Posterior vena cava (tissue), 2 donors: ENCODE measurements at regions of chr6 and their contacts with region 1.

Region 1: DNA sequence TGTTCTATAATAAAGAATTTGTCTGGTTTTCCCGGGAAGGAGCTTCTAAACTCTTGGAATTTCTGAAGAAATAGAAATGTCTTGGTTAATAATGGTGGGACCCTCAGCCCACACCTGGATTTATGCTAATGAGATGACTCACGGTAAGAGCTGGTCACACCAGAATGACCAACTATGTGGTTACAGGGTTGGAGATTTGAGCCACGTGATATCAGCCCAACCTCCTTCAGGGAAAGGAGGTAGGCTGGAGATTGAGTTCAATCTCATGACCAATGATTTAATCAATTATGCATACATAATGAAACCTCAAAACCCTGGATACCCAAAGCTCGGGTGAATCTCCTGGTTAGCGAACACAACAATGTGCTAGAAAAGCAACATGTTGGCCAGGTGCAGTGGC is 22.1 kb upstream of the CDKN1A start:
- DNase-seq: no peak

Region 2: GRCh38 chr6:36634317-36635108 is 21.9 kb before region 1 on chr6:
- intact Hi-C with region 1: loop called in 1 of 2 experiments (anchors 1 kb)
- DNase-seq: no peak